Calu3 (cell line): ENCODE measurements at regions of chr5 and their contacts with region 1.

Region 1: GRCh38 chr5:101212942-101213514 is 309.9 kb upstream of the ST8SIA4 start:
- DNase-seq: no peak
- H3K4me3 Mint-ChIP-seq: no peak overlapping the region
- H3K27ac Mint-ChIP-seq: no peak overlapping the region
- H3K4me1 Mint-ChIP-seq: no peaks in the 10 kb centered on the region
- H3K27me3 Mint-ChIP-seq: no peaks in the 10 kb centered on the region
- CTCF ChIP-seq: no peak

Region 2: GRCh38 chr5:100903039-100903887 is 309.8 kb before region 1 on chr5 and contains the start of gene ST8SIA4:
- CTCF ChIA-PET with region 1: no interaction called
- intact Hi-C with region 1: loop called (anchors 10 kb)
- DNase-seq: no peak
- H3K4me3 Mint-ChIP-seq: no peak within 1 kb of the TSS
- H3K27ac Mint-ChIP-seq: no peak within 1 kb of the TSS
- H3K4me1 Mint-ChIP-seq: peaks cover 21% of the 10 kb centered on the region
- H3K27me3 Mint-ChIP-seq: no peaks in the 10 kb centered on the region
- CTCF ChIP-seq: no peak
- total RNA-seq, gene ST8SIA4: not detected in 2 replicates

Region 3: DNA sequence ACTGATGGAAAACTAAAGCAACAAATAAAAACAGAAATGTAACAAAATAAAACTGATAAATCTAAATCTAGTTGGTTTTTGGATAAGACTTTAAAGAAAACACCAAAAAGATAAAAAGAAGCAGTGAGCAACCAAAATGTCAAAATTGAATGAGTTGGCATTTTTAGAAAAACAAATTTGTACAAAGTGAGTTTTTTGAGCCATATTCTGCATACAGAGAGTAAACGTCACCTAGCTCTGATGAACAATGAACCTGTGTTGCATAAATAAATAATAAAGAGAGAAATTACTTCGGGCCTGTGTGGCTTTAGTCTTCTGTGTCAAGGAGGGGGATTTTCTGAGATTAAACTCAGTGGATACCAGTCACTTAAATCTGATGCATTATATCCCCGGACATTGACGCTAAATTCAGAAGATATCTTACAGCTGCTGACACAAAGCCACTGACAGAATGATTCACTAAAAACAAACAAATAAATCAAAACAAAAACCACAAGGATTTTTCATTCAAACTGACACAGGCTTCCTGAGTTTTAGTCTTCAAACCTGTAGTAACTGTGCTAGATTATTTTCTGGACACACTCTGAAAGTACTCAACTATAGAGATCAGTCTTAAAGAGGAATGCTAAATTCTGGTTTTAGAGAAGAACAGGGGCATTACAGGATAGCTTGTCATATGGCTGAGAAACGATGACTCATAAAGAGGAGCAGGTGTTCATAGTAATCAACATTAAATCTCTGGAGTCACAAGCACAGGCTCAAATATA is 93.5 kb after region 1 on chr5:
- CTCF ChIA-PET with region 1: no interaction called
- intact Hi-C with region 1: no loop called
- DNase-seq: no peak
- H3K4me3 Mint-ChIP-seq: no peak overlapping the region
- H3K27ac Mint-ChIP-seq: peak overlapping the region; percentile 3
- H3K4me1 Mint-ChIP-seq: peaks cover 10% of the 10 kb centered on the region
- H3K27me3 Mint-ChIP-seq: no peaks in the 10 kb centered on the region
- CTCF ChIP-seq: no peak